Sciatic nerve (tissue), 2 donors: ENCODE measurements at regions of chr10 and their contacts with region 1.

Region 1: GRCh38 chr10:36441557-36441956 is 683.8 kb upstream of the ANKRD30A start:
- DNase-seq: no peak
- ATAC-seq: no peak

Region 2: DNA sequence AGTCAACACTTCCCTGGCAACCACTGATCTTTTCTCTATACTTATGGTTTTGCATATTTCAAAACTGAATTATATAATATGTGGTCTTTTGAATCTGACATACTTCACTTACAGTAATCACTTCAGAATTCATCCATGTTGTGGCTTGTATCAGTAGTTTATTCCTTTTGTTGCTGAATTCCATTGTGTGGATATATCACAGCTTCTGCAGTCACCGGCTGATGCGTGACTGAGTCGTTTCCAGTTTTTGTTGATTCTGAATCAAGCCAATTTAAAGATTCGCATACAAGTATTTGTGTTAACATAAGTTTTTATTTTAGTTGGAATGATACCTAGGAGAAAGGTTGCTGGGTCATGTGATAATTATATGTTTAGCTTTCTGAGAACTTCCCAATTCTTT is 11.3 kb after region 1 on chr10:
- intact Hi-C with region 1: loop called (anchors 1 kb)
- DNase-seq: no peak
- ATAC-seq: no peak